Right ventricle myocardium superior (tissue), 1 donor: ENCODE measurements at regions of chr15 and their contacts with region 1.

Region 1: GRCh38 chr15:85794603-85795336 is at the start of gene KLHL25:
- DNase-seq: peak; percentile 96
- ATAC-seq: peak; percentile 99
- total RNA-seq, gene KLHL25: 4.1 TPM

Region 2: GRCh38 chr15:85749261-85750151 is 45.3 kb before region 1 on chr15:
- intact Hi-C with region 1: loop called (anchors 5 kb)
- DNase-seq: peak; percentile 79
- ATAC-seq: peak; percentile 48

Region 3: GRCh38 chr15:85950101-85950500 is 155.3 kb after region 1 on chr15:
- intact Hi-C with region 1: no loop called
- DNase-seq: peak; percentile 58
- ATAC-seq: peak; percentile 97